Breast epithelium (tissue), 4 donors: ENCODE measurements at regions of chr2 and their contacts with region 1.

Region 1: DNA sequence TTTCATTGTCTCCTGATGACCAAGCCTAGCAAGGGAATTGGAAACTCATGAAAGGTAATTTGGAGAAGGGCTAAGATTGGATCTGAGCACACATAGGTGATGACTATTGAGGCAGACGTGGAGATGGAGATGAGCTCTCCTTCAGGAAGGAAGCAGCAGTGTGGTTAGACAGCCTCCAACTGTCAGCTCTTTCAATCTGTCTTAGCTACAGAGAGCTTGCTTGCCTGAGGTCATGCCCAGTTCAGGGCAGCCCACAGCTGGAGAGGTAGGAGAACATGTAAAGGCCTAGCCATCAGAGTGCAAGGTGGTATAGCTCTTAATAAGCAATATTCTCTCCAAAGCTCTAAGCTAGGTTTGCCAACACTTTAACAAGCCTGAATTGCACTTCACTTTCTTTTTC is 79.2 kb downstream of the THSD7B start:
- DNase-seq: no peak
- H3K4me3 ChIP-seq: no peak overlapping the region
- H3K27ac ChIP-seq: no peak overlapping the region
- H3K4me1 ChIP-seq: no peaks in the 10 kb centered on the region
- H3K27me3 ChIP-seq: no peaks in the 10 kb centered on the region
- CTCF ChIP-seq: no peak
- POLR2A ChIP-seq: no peak

Region 2: DNA sequence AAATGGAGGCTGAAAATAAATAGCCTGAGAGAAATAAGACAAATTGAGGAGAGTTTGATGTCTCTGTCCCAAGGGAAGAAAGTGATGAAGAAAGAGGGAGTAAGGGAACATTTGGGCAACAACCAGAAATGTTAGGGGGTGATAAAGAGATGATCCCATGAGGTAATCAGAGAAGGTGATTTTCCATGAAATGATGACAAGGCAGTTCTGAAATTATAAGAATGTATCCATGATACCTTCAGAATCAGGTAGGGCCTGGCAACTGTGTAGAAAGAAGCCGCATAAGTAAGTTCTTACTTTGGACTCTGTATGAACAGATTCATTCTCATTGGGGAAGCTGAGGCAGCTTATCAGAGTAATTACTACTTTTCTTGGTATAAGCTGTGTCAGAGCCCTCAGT is 26.9 kb after region 1 on chr2:
- intact Hi-C with region 1: loop called (anchors 2 kb)
- DNase-seq: no peak
- H3K4me3 ChIP-seq: no peak overlapping the region
- H3K27ac ChIP-seq: no peak overlapping the region
- H3K4me1 ChIP-seq: no peaks in the 10 kb centered on the region
- H3K27me3 ChIP-seq: no peaks in the 10 kb centered on the region
- CTCF ChIP-seq: no peak
- POLR2A ChIP-seq: no peak